ENCODE measurements at regions of chr5 and their contacts with region 1.

Region 1: GRCh38 chr5:158716668-158717067 is 383.0 kb downstream of the EBF1 start:
- DNase-seq: no peak
- H3K4me3 ChIP-seq: no peak overlapping the region
- H3K27ac ChIP-seq: no peak overlapping the region
- H3K4me1 ChIP-seq: no peaks in the 10 kb centered on the region
- H3K27me3 ChIP-seq: no peaks in the 10 kb centered on the region
- CTCF ChIP-seq: no peak
- POLR2A ChIP-seq: no peak

Region 2: GRCh38 chr5:158695595-158696330 is 20.9 kb before region 1 on chr5:
- intact Hi-C with region 1: no loop called
- DNase-seq: peak; percentile 41 to 65
- H3K4me3 ChIP-seq: no peak overlapping the region
- H3K27ac ChIP-seq: peak overlapping the region in 1 of 2 donors; percentile 36
- H3K4me1 ChIP-seq: no peaks in the 10 kb centered on the region
- H3K27me3 ChIP-seq: no peaks in the 10 kb centered on the region
- CTCF ChIP-seq: peak; percentile 84 to 94 (median 92)
- POLR2A ChIP-seq: no peak

Region 3: DNA sequence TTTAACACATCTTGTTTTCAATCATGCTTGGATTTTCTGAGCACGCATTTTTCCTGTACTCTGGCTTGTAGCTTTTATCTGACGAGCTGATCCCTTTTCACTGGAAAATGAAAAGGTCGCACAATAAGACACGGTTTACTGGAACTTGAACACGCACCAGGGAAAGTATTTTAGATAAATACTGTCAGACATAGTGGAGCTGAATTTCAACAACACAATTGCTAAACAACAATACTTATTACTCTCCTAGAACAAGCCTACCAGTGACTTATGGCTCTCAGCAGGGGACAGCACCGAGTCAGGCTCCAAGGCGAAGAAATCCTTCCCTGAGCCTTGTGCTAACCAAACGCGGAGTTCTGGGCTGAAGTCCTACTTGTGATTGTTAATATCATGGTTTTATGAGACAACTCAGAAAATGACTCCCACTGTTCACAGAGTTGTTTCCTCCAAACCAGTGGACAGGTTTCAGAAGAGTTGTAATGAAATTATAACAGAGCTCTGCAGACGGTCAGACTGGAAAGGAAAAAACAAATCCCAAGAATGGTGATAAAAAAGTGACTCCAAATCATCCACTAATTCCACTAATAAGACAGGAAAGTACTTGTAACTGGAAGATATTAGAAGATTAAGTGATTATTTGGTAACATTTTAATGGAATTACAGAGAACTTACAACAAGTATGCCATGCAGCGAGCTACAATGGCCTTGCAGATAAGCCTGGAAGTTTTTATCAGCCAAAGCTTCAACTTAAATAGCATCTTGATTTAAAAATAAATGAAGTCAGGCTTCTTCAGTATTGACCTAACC is 23.5 kb after region 1 on chr5:
- intact Hi-C with region 1: loop called (anchors 2 kb)
- DNase-seq: no peak
- H3K4me3 ChIP-seq: no peak overlapping the region
- H3K27ac ChIP-seq: no peak overlapping the region
- H3K4me1 ChIP-seq: no peaks in the 10 kb centered on the region
- H3K27me3 ChIP-seq: no peaks in the 10 kb centered on the region
- CTCF ChIP-seq: no peak
- POLR2A ChIP-seq: no peak

Region 4: GRCh38 chr5:158751961-158752655 is 35.4 kb after region 1 on chr5:
- intact Hi-C with region 1: no loop called
- DNase-seq: no peak
- H3K4me3 ChIP-seq: no peak overlapping the region
- H3K27ac ChIP-seq: no peak overlapping the region
- H3K4me1 ChIP-seq: no peaks in the 10 kb centered on the region
- H3K27me3 ChIP-seq: no peaks in the 10 kb centered on the region
- CTCF ChIP-seq: no peak
- POLR2A ChIP-seq: no peak

Region 5: GRCh38 chr5:160298189-160298588 is 1581.5 kb after region 1 on chr5:
- intact Hi-C with region 1: no loop called
- DNase-seq: no peak
- H3K4me3 ChIP-seq: no peak overlapping the region
- H3K27ac ChIP-seq: no peak overlapping the region
- H3K4me1 ChIP-seq: no peaks in the 10 kb centered on the region
- H3K27me3 ChIP-seq: no peaks in the 10 kb centered on the region
- CTCF ChIP-seq: no peak
- POLR2A ChIP-seq: no peak

Measured in breast epithelium (tissue), 4 donors.